Natural killer cell (primary cell): ENCODE measurements at regions of chr6 and their contacts with region 1.

Region 1: GRCh38 chr6:2353412-2354137 is 108.2 kb upstream of the GMDS start:
- DNase-seq: peak; percentile 18 to 66
- ATAC-seq: peak in 1 of 3 donors; percentile 61
- H3K4me3 ChIP-seq: no peak overlapping the region
- H3K4me3 Mint-ChIP-seq: no peak overlapping the region
- H3K27ac ChIP-seq: no peak overlapping the region
- H3K27ac Mint-ChIP-seq: no peak overlapping the region
- H3K4me1 ChIP-seq: no peaks in the 10 kb centered on the region
- H3K4me1 Mint-ChIP-seq: no peaks in the 10 kb centered on the region
- H3K27me3 ChIP-seq: no peaks in the 10 kb centered on the region
- H3K27me3 Mint-ChIP-seq: no peaks in the 10 kb centered on the region
- CTCF ChIP-seq: peak; percentile 69

Region 2: GRCh38 chr6:2103644-2104523 is 249.7 kb before region 1 on chr6:
- intact Hi-C with region 1: loop called (anchors 10 kb)
- DNase-seq: peak in 1 of 2 donors; percentile 56
- ATAC-seq: peak in 1 of 3 donors; percentile 71
- H3K4me3 ChIP-seq: no peak overlapping the region
- H3K4me3 Mint-ChIP-seq: no peak overlapping the region
- H3K27ac ChIP-seq: no peak overlapping the region
- H3K27ac Mint-ChIP-seq: no peak overlapping the region
- H3K4me1 ChIP-seq: no peaks in the 10 kb centered on the region
- H3K4me1 Mint-ChIP-seq: peaks cover 5% of the 10 kb centered on the region in 2 donors
- H3K27me3 ChIP-seq: no peaks in the 10 kb centered on the region
- H3K27me3 Mint-ChIP-seq: peaks cover 0 to 5% of the 10 kb centered on the region in 2 donors
- CTCF ChIP-seq: peak; percentile 44

Region 3: DNA sequence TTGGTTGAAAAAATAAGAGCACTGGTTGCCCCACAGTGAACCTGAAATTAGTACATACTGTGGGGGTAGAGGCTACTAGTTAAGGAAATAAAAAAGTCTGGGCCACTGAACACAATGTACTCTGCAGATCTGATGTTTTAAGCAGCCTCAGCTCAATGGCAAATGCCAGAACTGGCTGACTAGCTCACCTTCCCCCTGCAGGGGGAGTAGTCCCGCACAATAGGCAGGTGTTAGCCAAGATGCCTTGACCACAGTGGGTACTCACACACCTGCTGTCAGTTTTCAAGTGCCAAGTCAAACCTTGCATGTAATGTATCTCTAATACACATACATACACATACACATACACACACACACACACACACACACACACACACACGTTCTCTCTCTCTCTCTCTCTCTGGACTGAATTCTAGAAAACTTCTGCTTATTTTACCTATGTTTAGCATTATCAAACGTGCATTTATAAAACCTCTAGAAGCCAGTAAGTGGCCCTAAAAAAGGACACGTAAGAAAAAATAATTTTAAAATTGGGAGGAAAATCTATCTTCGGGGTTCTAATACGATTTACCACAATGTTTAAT is 144.3 kb before region 1 on chr6:
- intact Hi-C with region 1: loop called (anchors 10 kb)
- DNase-seq: peak in 1 of 2 donors; percentile 54
- ATAC-seq: peak; percentile 50 to 72 (median 55)
- H3K4me3 ChIP-seq: no peak overlapping the region
- H3K4me3 Mint-ChIP-seq: no peak overlapping the region
- H3K27ac ChIP-seq: no peak overlapping the region
- H3K27ac Mint-ChIP-seq: no peak overlapping the region
- H3K4me1 ChIP-seq: no peaks in the 10 kb centered on the region
- H3K4me1 Mint-ChIP-seq: peaks cover 5 to 7% of the 10 kb centered on the region in 2 donors
- H3K27me3 ChIP-seq: no peaks in the 10 kb centered on the region
- H3K27me3 Mint-ChIP-seq: peaks cover 0 to 4% of the 10 kb centered on the region in 2 donors
- CTCF ChIP-seq: peak; percentile 46

Region 4: GRCh38 chr6:2225422-2226392 is 127.9 kb before region 1 on chr6:
- intact Hi-C with region 1: no loop called
- DNase-seq: no peak
- ATAC-seq: no peak
- H3K4me3 ChIP-seq: no peak overlapping the region
- H3K4me3 Mint-ChIP-seq: no peak overlapping the region
- H3K27ac ChIP-seq: no peak overlapping the region
- H3K27ac Mint-ChIP-seq: no peak overlapping the region
- H3K4me1 ChIP-seq: peaks cover 13% of the 10 kb centered on the region
- H3K4me1 Mint-ChIP-seq: peaks cover 18 to 29% of the 10 kb centered on the region in 2 donors
- H3K27me3 ChIP-seq: no peaks in the 10 kb centered on the region
- H3K27me3 Mint-ChIP-seq: peaks cover 0 to 2% of the 10 kb centered on the region in 2 donors
- CTCF ChIP-seq: no peak

Region 5: DNA sequence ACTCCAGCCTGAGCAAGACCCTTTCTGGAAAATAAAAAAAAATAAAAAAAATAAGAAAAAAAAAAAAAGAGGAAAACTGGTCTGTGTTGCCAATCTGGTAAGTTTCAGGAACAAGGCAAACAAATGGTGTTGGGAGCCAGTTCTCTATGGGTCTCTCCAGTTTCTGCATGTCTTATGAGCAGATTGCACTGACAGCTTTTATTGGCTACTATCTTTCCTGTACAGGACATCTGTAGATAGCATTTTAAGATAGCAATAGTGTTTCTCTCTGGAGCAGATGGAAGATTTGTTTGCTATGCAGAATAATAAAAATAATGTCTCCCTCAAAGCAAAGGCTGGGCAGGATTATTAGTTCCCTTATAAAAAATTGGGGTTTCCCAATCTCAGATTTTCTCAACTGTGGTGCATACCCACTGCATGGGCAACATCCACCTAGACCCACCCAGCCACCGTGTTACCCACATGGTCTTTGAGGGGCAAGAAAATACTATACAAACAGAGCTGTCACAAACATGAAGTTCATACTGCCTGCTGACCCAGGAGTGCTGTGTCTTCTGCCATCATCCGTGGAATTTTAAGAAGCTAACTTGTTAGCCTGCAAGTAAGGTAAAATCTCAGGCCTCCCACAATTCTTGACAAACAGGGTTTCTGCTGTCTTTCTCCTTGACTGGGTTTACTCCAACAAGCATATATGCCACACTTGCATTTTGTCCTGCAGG is 117.6 kb before region 1 on chr6:
- intact Hi-C with region 1: no loop called
- DNase-seq: no peak
- ATAC-seq: no peak
- H3K4me3 ChIP-seq: no peak overlapping the region
- H3K4me3 Mint-ChIP-seq: no peak overlapping the region
- H3K27ac ChIP-seq: no peak overlapping the region
- H3K27ac Mint-ChIP-seq: no peak overlapping the region
- H3K4me1 ChIP-seq: no peaks in the 10 kb centered on the region
- H3K4me1 Mint-ChIP-seq: peaks cover 0 to 5% of the 10 kb centered on the region in 2 donors
- H3K27me3 ChIP-seq: no peaks in the 10 kb centered on the region
- H3K27me3 Mint-ChIP-seq: no peaks in the 10 kb centered on the region
- CTCF ChIP-seq: no peak